Heart left ventricle (tissue), 16 donors: ENCODE measurements at regions of chr10 and their contacts with region 1.

Region 1: DNA sequence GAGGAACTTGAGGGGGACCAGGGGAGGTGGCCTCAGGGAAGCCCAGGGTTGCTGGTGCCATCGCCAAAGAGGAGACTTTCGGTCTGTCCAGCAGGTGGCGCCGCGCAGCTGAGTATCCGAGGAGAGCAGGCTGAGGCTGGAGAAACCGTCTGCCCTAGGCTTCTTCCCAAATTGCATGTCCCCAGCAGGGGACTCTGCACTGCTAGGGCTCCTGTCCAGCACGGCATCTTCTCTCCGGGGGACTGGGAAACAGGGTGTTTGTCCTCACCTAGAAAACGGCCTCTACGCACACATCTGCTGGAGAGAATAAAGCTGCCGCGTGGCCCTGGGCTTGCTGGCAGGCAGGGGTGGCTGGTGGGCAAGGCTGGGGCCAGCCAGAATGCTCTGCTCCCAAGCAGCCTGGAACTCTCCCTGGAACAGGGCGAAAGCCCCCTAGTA is 161.9 kb downstream of the SH2D4B start:
- DNase-seq: peak; percentile 76 to 93 (median 80)
- ATAC-seq: peak; percentile 69 to 91 (median 84)
- H3K4me3 ChIP-seq: no peak overlapping the region
- H3K27ac ChIP-seq: no peak overlapping the region
- H3K4me1 ChIP-seq: peaks cover 0 to 8% (median 0%) of the 10 kb centered on the region in 12 donors
- H3K27me3 ChIP-seq: peaks cover 0 to 3% (median 0%) of the 10 kb centered on the region in 9 donors
- CTCF ChIP-seq: peak; percentile 69 to 87 (median 82)
- POLR2A ChIP-seq: no peak

Region 2: DNA sequence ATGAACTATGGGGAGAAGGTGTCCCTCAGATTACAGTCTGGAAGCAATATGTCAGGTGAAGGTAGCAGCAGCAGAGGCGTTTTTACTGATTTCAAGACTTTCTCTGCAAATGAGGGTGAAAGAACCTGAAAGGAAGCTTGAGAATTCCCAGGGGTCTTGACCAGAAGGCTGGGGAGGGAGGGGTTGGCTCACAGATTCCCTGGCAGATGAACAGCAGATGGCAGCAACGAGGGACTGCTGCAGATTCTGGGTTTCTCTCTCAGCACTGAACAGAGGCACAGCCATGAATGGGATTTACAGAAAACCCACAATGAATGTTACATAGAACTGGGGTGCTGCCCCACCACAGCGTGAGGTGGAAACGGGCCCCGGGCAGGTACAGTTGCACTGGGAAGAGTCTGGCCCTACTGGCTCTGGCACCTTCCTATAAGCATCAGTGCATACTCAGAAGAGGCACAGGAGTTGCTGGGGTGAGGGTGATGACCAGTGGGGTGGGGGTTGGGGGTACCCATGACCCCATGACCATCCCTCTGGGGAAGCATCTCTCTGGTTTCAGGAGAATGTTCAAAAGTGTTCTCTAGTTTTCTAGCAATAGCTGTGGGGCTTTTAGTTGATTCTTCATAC is 155.8 kb after region 1 on chr10:
- intact Hi-C with region 1: no loop called
- DNase-seq: no peak
- ATAC-seq: no peak
- H3K4me3 ChIP-seq: no peak overlapping the region
- H3K27ac ChIP-seq: no peak overlapping the region
- H3K4me1 ChIP-seq: no peaks in the 10 kb centered on the region
- H3K27me3 ChIP-seq: peaks cover 0 to 10% (median 0%) of the 10 kb centered on the region in 9 donors
- CTCF ChIP-seq: peak in 5 of 12 donors; percentile 10 to 36 (median 24)
- POLR2A ChIP-seq: no peak

Region 3: DNA sequence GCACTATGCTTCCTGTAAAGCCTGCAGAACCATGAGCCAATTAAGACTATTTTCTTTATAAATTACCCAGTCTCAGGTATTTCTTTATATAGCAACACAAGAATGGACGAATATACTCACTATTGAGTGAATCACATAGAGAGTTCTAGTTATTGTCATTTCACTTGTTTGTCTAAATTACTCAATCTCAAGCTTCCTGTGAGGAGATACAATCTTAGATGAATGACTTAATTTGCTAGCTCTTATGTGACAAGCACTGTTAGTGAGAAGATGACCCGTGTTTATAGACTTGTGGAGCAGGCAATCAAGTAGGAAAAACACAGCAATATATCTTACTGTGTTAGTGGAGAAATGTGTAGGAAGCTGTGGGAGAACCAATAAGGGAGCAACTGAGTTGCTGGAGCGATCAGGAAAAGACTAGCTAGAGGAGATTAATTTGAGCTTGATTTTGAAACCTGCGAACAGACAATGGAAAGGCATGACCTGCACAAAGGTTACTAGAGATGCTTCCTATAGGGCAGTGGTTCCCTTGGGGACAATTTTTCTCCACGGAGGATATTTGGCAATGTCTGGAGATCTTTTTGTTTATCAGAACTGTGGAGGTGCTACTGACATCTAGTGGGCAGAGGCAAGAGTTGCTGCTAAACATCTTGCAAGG is 319.2 kb after region 1 on chr10:
- intact Hi-C with region 1: loop called in 2 of 10 experiments (anchors 10 kb)
- DNase-seq: no peak
- ATAC-seq: peak in 2 of 4 donors; percentile 14 to 56
- H3K4me3 ChIP-seq: no peak overlapping the region
- H3K27ac ChIP-seq: no peak overlapping the region
- H3K4me1 ChIP-seq: no peaks in the 10 kb centered on the region
- H3K27me3 ChIP-seq: no peaks in the 10 kb centered on the region
- CTCF ChIP-seq: peak; percentile 41 to 69 (median 54)
- POLR2A ChIP-seq: no peak